ENCODE measurements at regions of chr15 and their contacts with region 1.

Region 1: DNA sequence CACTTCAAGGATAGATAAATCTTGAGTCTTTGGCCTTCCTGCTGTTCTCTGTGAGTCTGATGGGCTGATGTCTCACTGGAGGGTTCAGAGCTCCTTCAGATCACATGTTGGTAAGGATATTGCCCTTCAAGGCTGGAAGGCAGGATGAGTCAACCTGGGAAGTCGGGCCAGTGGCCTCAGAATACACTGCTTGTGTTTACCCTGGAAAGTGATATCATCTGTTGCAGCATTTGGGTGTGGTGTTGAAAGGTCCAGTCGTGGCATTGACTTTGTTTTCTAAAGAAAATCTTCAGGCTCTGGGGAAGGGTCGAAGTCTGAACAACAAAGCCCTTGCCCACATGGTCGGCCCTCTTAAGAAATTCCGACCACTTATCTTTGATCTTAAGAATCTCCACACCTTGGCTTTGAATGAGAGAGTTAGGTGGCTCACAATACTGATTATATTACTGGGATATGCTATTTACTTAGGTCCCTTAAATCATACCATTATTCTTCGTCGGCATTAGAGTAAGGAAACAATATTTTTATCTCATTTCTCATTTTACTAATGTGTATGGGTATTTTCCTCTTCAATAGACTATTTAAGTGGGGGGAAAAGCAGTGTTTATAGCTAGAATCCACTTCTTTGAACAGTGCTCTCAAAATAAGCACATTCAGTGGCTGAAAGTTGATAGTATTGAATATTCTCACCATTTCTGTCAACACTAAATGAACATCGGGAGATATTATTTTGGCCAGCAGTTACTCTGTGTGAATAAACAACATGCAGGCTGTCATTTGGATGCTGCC is 303.9 kb upstream of the RASGRP1 start:
- DNase-seq: peak; percentile 19 to 76
- ATAC-seq: peak; percentile 73 to 82
- H3K4me3 ChIP-seq: no peak overlapping the region
- H3K27ac ChIP-seq: peak overlapping the region in 1 of 4 donors; percentile 1
- H3K4me1 ChIP-seq: peaks cover 0 to 2% of the 10 kb centered on the region in 2 donors
- H3K27me3 ChIP-seq: no peaks in the 10 kb centered on the region
- CTCF ChIP-seq: no peak
- POLR2A ChIP-seq: no peak

Region 2: DNA sequence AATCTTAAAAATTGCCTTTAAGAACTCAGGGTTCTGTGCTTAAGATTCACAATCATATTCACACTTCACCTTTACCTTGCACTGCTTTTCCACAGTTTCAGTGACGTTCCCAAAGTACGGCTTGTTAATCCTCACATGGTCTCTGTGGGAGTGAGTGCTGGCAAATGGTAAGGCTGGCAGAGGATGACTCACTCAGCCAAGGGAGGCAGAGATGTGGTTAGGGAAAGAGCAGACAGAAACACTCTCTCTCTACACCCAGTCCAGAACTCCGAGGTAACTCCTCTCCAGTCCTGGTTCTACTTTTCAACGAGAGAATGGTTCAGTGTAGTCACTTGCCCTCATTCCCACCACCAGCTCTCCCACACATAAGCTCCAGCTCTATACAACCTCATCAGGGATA is 337.0 kb before region 1 on chr15:
- in situ Hi-C with region 1: no loop called
- intact Hi-C with region 1: no loop called
- DNase-seq: no peak
- ATAC-seq: no peak
- H3K4me3 ChIP-seq: no peak overlapping the region
- H3K27ac ChIP-seq: no peak overlapping the region
- H3K4me1 ChIP-seq: no peaks in the 10 kb centered on the region
- H3K27me3 ChIP-seq: no peaks in the 10 kb centered on the region
- CTCF ChIP-seq: no peak
- POLR2A ChIP-seq: no peak

Region 3: GRCh38 chr15:38991126-38991525 is 122.6 kb after region 1 on chr15:
- in situ Hi-C with region 1: no loop called
- intact Hi-C with region 1: loop called (anchors 10 kb)
- DNase-seq: no peak
- ATAC-seq: no peak
- H3K4me3 ChIP-seq: no peak overlapping the region
- H3K27ac ChIP-seq: no peak overlapping the region
- H3K4me1 ChIP-seq: peaks cover 9% of the 10 kb centered on the region in 2 donors
- H3K27me3 ChIP-seq: no peaks in the 10 kb centered on the region
- CTCF ChIP-seq: peak in 2 of 5 experiments; percentile 25 to 33
- POLR2A ChIP-seq: no peak

Measured in gastrocnemius medialis (tissue), 4 donors.